A549 (cell line): ENCODE measurements at regions of chr15 and their contacts with region 1.

Region 1: GRCh38 chr15:40782580-40783227 is 12.9 kb downstream of the C15orf62 start:
- DNase-seq: peak; percentile 43 to 66
- ATAC-seq: peak; percentile 99 to 100
- H3K4me3 ChIP-seq: no peak overlapping the region
- H3K27ac ChIP-seq: no peak overlapping the region
- H3K4me1 ChIP-seq: peaks cover 13% of the 10 kb centered on the region
- CTCF ChIP-seq: peak; percentile 64
- EP300 ChIP-seq: no peak
- POLR2A ChIP-seq: no peak
- RAD21 ChIP-seq: peak; percentile 68 to 75

Region 2: GRCh38 chr15:40684381-40684780 is 98.3 kb before region 1 on chr15:
- CTCF ChIA-PET with region 1: interaction called, 19 read pairs
- POLR2A ChIA-PET with region 1: no interaction called
- DNase-seq: no peak
- ATAC-seq: no peak
- H3K4me3 ChIP-seq: no peak overlapping the region
- H3K27ac ChIP-seq: no peak overlapping the region
- H3K4me1 ChIP-seq: no peaks in the 10 kb centered on the region
- CTCF ChIP-seq: no peak
- EP300 ChIP-seq: no peak
- POLR2A ChIP-seq: no peak
- RAD21 ChIP-seq: no peak

Region 3: DNA sequence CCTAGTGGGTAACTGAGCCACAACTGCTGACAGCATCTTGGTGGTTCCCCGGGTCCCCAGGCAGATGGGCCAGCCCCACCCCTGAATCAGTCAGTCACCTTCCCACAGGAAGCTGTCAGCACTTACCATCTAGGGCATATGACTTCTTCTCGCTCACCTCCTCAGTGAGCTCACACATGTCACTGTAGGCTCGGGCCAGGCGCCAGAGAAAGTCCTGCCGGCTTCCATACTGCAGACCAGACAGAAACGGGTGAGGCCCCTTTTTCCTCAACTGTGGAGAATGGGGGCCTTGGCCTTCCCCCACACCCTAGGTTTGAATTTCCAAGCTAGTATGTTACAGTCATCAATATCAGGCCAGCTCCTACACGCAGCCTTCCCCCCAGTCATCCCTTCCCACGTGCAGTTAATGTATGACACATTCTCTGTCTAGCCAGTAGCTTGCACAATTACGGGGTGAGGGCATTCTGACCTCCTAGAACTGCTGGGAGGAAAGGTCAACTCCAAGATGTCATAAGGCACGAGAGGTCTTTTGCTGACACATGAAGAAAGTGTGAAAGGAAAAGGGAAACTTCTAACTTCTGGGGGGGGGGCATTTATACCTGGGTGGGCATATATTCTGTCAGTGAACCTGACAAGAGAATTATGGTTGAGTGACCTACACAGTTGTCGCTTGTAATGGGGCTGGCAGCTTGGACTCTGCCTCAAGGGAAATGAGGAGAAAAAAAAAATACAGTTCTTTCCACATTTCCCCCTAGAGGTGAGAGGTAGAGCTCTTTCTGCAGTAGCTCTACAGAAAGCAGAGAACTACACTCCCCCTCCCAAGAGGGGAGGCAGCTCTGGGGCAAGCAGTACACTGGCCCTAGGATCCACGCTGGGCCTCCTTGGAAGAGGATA is 38.5 kb before region 1 on chr15:
- CTCF ChIA-PET with region 1: interaction called, 17 read pairs
- POLR2A ChIA-PET with region 1: interaction called, 3 read pairs
- DNase-seq: peak in 1 of 2 experiments; percentile 56
- ATAC-seq: peak; percentile 58 to 75
- H3K4me3 ChIP-seq: no peak overlapping the region
- H3K27ac ChIP-seq: peak overlapping the region in 1 of 2 experiments; percentile 8; a peak in 2 of 6 replicates
- H3K4me1 ChIP-seq: peaks cover 14% of the 10 kb centered on the region
- CTCF ChIP-seq: no peak
- EP300 ChIP-seq: no peak
- POLR2A ChIP-seq: no peak
- RAD21 ChIP-seq: no peak

Region 4: GRCh38 chr15:40750885-40751284 is 31.8 kb before region 1 on chr15:
- CTCF ChIA-PET with region 1: interaction called, 17 read pairs
- POLR2A ChIA-PET with region 1: interaction called, 3 read pairs
- DNase-seq: no peak
- ATAC-seq: no peak
- H3K4me3 ChIP-seq: no peak overlapping the region
- H3K27ac ChIP-seq: no peak overlapping the region
- H3K4me1 ChIP-seq: 0 out of 3 replicates have a peak, but pooled peaks cover 3% of the 10 kb centered on the region
- CTCF ChIP-seq: no peak
- EP300 ChIP-seq: no peak
- POLR2A ChIP-seq: no peak
- RAD21 ChIP-seq: no peak

Region 5: GRCh38 chr15:40769274-40770146 is 13.2 kb before region 1 on chr15 and contains the start of gene C15orf62:
- CTCF ChIA-PET with region 1: interaction called, 40 read pairs
- POLR2A ChIA-PET with region 1: interaction called, 3 read pairs
- DNase-seq: no peak
- ATAC-seq: no peak
- H3K4me3 ChIP-seq: no peak within 1 kb of the TSS
- H3K27ac ChIP-seq: no peak within 1 kb of the TSS
- H3K4me1 ChIP-seq: peaks cover 11% of the 10 kb centered on the region; the same call in 2 of the 3 replicates
- CTCF ChIP-seq: no peak
- EP300 ChIP-seq: no peak
- POLR2A ChIP-seq: no peak
- RAD21 ChIP-seq: no peak
- polyA plus RNA-seq, gene C15orf62: 0.10 and 0.11 TPM in 2 replicates

Region 6: GRCh38 chr15:40821195-40821594 is 38.5 kb after region 1 on chr15:
- CTCF ChIA-PET with region 1: no interaction called
- POLR2A ChIA-PET with region 1: no interaction called
- DNase-seq: no peak
- ATAC-seq: no peak
- H3K4me3 ChIP-seq: no peak overlapping the region
- H3K27ac ChIP-seq: no peak overlapping the region
- H3K4me1 ChIP-seq: peaks cover 29% of the 10 kb centered on the region
- CTCF ChIP-seq: no peak
- EP300 ChIP-seq: no peak
- POLR2A ChIP-seq: no peak
- RAD21 ChIP-seq: no peak

Region 7: GRCh38 chr15:40838776-40839175 is 56.1 kb after region 1 on chr15:
- CTCF ChIA-PET with region 1: no interaction called
- POLR2A ChIA-PET with region 1: no interaction called
- DNase-seq: no peak
- ATAC-seq: no peak
- H3K4me3 ChIP-seq: no peak overlapping the region
- H3K27ac ChIP-seq: no peak overlapping the region
- H3K4me1 ChIP-seq: peaks cover 17% of the 10 kb centered on the region
- CTCF ChIP-seq: no peak
- EP300 ChIP-seq: no peak
- POLR2A ChIP-seq: no peak
- RAD21 ChIP-seq: no peak